ENCODE measurements at regions of chr10 and their contacts with region 1.

Region 1: DNA sequence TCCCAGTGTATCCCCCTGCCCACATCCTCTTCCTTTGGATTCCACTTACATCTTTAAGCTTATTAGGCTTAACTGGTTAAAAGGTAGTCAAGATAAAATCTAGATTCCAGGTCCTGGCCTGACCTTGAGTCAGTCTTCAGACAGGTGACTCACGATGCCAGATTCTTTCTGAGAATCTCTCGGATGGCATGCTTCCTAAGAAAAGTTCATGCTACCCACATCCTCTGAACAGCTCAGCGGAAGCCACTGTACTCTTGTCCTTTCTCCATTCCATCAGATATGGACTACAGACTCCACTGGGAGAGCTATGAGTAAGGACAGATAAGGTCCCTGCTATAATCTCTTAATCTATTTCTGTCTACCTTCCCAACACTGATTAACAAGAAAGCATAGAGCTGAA is 43.4 kb downstream of the DNMBP start:
- DNase-seq: peak; percentile 93
- H3K4me3 ChIP-seq: peak overlapping the region in 1 of 3 experiments; percentile 6
- H3K27ac ChIP-seq: peak overlapping the region; percentile 96
- H3K4me1 ChIP-seq: peaks cover 69% of the 10 kb centered on the region
- H3K27me3 ChIP-seq: no peaks in the 10 kb centered on the region
- CTCF ChIP-seq: no peak
- POLR2A ChIP-seq: peak; percentile 43

Region 2: GRCh38 chr10:99854860-99855259 is 111.4 kb before region 1 on chr10:
- CTCF ChIA-PET with region 1: interaction called, 6 read pairs
- POLR2A ChIA-PET with region 1: no interaction called
- dilution Hi-C with region 1: no loop called
- intact Hi-C with region 1: loop called (anchors 2 kb)
- DNase-seq: peak; percentile 91
- H3K4me3 ChIP-seq: no peak overlapping the region
- H3K27ac ChIP-seq: no peak overlapping the region
- H3K4me1 ChIP-seq: no peaks in the 10 kb centered on the region
- H3K27me3 ChIP-seq: no peaks in the 10 kb centered on the region
- CTCF ChIP-seq: peak; percentile 53 to 66
- POLR2A ChIP-seq: no peak

Region 3: DNA sequence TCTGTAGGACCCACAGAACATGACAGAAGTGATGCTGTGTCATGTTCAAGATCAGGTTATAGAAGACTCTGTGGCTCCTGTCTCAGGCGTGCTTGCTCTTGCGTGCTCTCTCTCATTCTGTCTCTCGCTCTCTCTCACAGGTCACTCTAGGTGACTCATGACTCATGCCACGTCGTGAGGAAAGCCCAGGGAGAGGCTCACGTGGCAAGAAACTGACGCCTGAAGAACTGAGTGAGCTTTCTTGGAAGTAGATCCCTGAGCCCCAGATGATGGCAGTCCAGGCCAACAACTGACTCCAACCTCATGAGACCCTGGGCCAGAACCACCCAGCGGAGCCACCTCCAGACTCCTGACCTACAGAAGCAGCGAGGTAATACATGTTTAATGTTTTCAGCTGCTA is 59.8 kb before region 1 on chr10:
- CTCF ChIA-PET with region 1: interaction called, 53 read pairs
- POLR2A ChIA-PET with region 1: interaction called, 3 read pairs
- dilution Hi-C with region 1: no loop called
- intact Hi-C with region 1: loop called (anchors 1 kb)
- DNase-seq: peak; percentile 67
- H3K4me3 ChIP-seq: no peak overlapping the region
- H3K27ac ChIP-seq: peak overlapping the region; percentile 66
- H3K4me1 ChIP-seq: peaks cover 21% of the 10 kb centered on the region
- H3K27me3 ChIP-seq: no peaks in the 10 kb centered on the region
- CTCF ChIP-seq: peak; percentile 8 to 36
- POLR2A ChIP-seq: no peak

Region 4: GRCh38 chr10:99917963-99918825 is 48.1 kb before region 1 on chr10:
- CTCF ChIA-PET with region 1: interaction called, 21 read pairs
- POLR2A ChIA-PET with region 1: no interaction called
- dilution Hi-C with region 1: no loop called
- intact Hi-C with region 1: no loop called
- DNase-seq: peak; percentile 90
- H3K4me3 ChIP-seq: peak overlapping the region in 1 of 3 experiments; percentile 10
- H3K27ac ChIP-seq: peak overlapping the region; percentile 67
- H3K4me1 ChIP-seq: peaks cover 66% of the 10 kb centered on the region
- H3K27me3 ChIP-seq: no peaks in the 10 kb centered on the region
- CTCF ChIP-seq: no peak
- POLR2A ChIP-seq: no peak

Region 5: DNA sequence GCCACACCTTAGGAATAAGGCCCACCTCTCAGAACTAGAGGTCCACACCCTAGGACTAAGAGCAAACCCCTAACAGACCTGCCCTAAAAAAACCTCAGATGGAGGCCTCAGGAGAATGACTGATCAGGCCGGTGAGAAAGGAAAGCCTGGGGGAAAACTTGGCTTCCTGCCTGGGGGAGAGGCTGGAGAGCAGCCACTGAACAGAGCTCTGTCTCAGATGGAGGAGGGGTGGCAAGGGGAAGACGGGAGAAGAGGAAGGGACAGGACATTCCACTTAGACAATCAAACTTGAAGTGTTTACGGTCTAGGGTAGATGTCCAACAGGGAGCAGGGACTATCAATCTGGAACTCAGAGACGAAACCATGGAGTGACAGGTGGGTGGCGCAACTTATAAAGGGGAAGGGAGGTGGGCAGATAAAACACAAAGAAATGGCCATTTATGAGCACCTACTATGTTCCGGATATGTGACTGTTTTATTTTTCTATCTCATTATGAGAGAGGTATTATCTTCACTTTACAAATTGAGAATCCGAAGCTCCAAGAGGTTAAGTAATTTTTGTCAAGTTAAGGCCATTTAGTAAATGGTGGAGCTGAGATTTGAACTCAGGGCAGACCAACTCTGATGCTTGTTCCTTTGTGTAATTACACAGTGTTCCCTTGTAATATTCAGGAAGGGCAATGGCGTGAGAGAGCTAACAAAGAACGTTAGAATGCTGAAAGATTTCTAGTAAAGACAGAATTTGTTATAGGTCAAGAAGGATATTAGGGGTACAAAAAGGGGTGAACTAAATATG is 39.2 kb before region 1 on chr10:
- CTCF ChIA-PET with region 1: interaction called, 20 read pairs
- POLR2A ChIA-PET with region 1: interaction called, 7 read pairs
- dilution Hi-C with region 1: no loop called
- intact Hi-C with region 1: loop called (anchors 1 kb)
- DNase-seq: peak; percentile 91
- H3K4me3 ChIP-seq: peak overlapping the region; percentile 40 to 64 (median 40)
- H3K27ac ChIP-seq: peak overlapping the region; percentile 73
- H3K4me1 ChIP-seq: peaks cover 77% of the 10 kb centered on the region
- H3K27me3 ChIP-seq: no peaks in the 10 kb centered on the region
- CTCF ChIP-seq: no peak
- POLR2A ChIP-seq: peak; percentile 78

Region 6: GRCh38 chr10:99976886-99977665 is 10.8 kb after region 1 on chr10:
- CTCF ChIA-PET with region 1: interaction called, 27 read pairs
- POLR2A ChIA-PET with region 1: interaction called, 3 read pairs
- dilution Hi-C with region 1: no loop called
- intact Hi-C with region 1: no loop called
- DNase-seq: peak; percentile 87
- H3K4me3 ChIP-seq: peak overlapping the region in 1 of 3 experiments; percentile 12
- H3K27ac ChIP-seq: peak overlapping the region; percentile 69
- H3K4me1 ChIP-seq: peaks cover 57% of the 10 kb centered on the region
- H3K27me3 ChIP-seq: no peaks in the 10 kb centered on the region
- CTCF ChIP-seq: no peak
- POLR2A ChIP-seq: no peak

Region 7: GRCh38 chr10:99983280-99983988 is 17.1 kb after region 1 on chr10:
- CTCF ChIA-PET with region 1: interaction called, 17 read pairs
- POLR2A ChIA-PET with region 1: interaction called, 3 read pairs
- dilution Hi-C with region 1: no loop called
- intact Hi-C with region 1: loop called (anchors 1 kb)
- DNase-seq: peak; percentile 90
- H3K4me3 ChIP-seq: peak overlapping the region in 1 of 3 experiments; percentile 6
- H3K27ac ChIP-seq: peak overlapping the region; percentile 82
- H3K4me1 ChIP-seq: peaks cover 65% of the 10 kb centered on the region
- H3K27me3 ChIP-seq: no peaks in the 10 kb centered on the region
- CTCF ChIP-seq: no peak
- POLR2A ChIP-seq: peak; percentile 70

Measured in endothelial cell of umbilical vein (primary cell).